ENCODE measurements at regions of chr19 and their contacts with region 1.

Region 1: DNA sequence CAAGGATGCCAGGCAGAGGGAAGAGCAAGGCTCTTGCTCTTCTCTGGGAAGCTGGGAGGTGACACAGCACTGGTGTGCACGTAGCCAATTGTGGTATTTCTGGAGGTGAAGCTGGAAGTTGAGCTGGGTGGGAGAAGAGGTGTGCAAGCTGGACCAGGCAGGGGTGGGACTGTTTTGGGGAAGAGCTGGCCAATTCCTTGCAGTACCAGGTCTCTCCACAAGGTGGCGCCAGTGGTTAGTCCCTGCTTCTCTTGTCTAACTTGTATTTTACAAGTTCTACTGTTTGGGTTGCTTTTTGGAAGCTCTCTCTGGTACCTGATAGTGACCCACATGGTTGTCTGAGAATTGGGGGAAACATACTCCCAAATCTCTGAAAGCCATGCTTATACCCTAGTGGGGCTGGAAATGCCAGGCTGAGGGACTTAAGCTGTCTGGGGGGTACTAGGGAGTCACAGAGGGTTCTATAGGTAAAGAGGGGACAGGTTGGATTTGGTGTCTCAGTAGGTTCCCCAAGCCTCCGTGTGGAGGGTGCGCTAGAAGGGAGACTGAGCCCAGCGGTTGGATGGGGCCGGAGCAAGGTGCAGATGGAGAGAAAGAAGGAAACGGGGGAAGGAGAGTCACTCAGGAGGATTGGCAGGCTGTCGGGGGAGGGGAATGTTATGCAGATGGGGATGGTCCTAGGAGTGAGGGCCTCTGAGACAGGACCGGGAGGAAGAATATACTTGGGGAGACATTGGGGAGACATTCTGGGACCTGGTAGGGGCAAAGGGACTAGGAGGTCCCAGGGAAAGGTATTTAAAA is 3.0 kb downstream of the HPN start:
- DNase-seq: no peak
- H3K4me3 ChIP-seq: no peak overlapping the region
- H3K27me3 ChIP-seq: peaks cover 2% of the 10 kb centered on the region; the same call in 1 of the 2 replicates
- CTCF ChIP-seq: peak; percentile 96

Region 2: DNA sequence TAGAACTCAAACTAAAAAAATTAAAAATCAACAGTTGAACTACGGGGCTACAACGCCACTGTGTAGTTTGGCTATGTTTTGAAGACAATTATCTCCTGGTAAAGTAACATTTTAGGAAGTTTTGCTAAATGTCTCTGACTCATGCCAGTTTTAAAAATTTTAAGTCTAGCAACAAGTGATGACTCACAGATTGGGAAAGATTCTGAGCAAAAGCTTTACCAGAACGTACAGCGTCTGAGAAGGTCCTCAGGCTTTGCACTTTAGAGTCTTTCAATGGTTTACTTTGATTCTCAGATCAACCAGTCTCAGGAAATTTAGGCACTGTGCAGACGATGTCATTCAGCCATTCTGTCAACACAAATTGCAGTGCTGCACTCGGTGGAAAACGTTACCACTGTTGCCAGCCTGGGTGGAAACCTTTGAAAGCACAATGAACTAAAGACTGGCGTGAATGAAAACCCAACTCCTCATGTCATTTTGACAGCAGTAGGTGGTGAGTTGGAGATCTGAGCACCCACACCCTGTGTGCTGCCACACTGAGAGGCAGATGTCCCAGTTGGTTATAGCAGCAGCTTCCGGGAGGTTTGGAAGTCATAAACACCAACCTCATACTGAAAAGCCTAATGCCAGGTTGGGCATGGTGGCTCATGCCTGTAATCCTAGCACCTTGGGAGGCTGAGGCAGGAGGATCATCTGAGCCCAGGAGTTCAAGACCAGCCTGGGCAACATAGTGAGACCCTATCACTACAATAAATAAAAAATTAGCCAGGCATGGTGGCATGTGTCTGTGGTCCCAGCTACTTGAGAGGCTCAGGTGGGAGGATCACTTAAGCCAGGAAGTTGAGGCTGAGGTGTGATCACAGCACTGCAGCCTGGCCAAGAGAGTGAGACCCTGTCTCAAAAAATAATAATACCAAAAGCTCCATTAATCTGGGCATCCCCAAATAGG is 569.2 kb before region 1 on chr19:
- CTCF ChIA-PET with region 1: no interaction called
- POLR2A ChIA-PET with region 1: no interaction called
- DNase-seq: peak; percentile 67
- H3K4me3 ChIP-seq: no peak overlapping the region
- H3K27me3 ChIP-seq: no peaks in the 10 kb centered on the region
- CTCF ChIP-seq: no peak

Region 3: DNA sequence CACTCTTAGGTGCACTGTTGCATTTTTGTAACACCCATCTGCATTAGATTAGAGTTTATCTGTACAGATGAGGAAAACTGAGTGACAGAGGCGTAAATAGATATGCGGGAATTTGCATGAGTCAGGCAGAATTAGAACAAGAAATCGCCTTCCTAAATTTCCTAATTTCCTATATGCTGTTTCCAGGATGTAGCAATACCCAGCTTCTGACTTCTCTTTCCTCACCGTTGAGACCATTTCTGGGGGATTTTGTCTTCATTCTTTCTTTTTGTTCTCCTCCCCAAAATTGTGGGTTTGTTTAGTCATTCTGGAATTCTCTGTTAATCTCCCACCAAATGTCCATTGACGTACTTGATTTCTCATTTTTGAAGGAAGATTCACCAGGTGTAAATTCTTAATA is 69.9 kb before region 1 on chr19:
- CTCF ChIA-PET with region 1: interaction called, 15 read pairs
- POLR2A ChIA-PET with region 1: no interaction called
- DNase-seq: no peak
- H3K4me3 ChIP-seq: no peak overlapping the region
- H3K27me3 ChIP-seq: 0 out of 2 replicates have a peak, but pooled peaks cover 2% of the 10 kb centered on the region
- CTCF ChIP-seq: no peak

Region 4: DNA sequence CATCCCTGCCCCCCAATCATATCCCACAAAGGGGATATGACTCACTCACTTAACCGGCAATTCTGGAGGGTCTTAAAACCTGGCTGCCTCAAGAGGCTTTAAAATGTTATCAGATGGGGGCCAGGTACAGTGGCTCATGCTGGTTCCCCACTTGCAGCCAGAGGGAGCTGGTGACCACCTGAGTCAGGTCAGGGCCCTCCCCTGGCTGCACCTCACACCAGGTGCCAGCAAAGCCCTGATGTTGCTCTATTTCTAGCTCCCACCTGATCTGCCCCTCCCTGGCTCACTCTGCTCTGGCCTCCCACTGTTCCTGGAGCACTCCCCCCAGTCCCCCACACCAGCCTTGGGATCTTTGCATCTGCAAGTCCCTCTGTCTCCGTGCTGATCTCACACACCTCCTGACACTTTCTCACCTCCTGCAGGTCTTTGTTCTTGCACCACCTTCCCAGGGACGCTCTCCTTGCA is 11.2 kb after region 1 on chr19:
- CTCF ChIA-PET with region 1: interaction called, 36 read pairs
- POLR2A ChIA-PET with region 1: no interaction called
- DNase-seq: no peak
- H3K4me3 ChIP-seq: no peak overlapping the region
- H3K27me3 ChIP-seq: peaks cover 8% of the 10 kb centered on the region
- CTCF ChIP-seq: no peak

Region 5: GRCh38 chr19:35080613-35081170 is 36.2 kb after region 1 on chr19:
- CTCF ChIA-PET with region 1: interaction called, 29 read pairs
- POLR2A ChIA-PET with region 1: no interaction called
- DNase-seq: no peak
- H3K4me3 ChIP-seq: no peak overlapping the region
- H3K27me3 ChIP-seq: no peaks in the 10 kb centered on the region
- CTCF ChIP-seq: no peak

Region 6: GRCh38 chr19:35135389-35135909 is 90.9 kb after region 1 on chr19:
- CTCF ChIA-PET with region 1: interaction called, 22 read pairs
- POLR2A ChIA-PET with region 1: no interaction called
- DNase-seq: no peak
- H3K4me3 ChIP-seq: no peak overlapping the region
- H3K27me3 ChIP-seq: peaks cover 2% of the 10 kb centered on the region; the same call in 1 of the 2 replicates
- CTCF ChIP-seq: peak; percentile 93

Measured in BJ (cell line).